Activated CD4-positive, alpha-beta T cell treated with anti-CD3 and anti-CD28 coated beads, Interleukin-2, amount 10 ng/mL, durations not matched to agents 24 days and 14 days (primary cell): ENCODE measurements at regions of chr3 and their contacts with region 1.

Region 1: DNA sequence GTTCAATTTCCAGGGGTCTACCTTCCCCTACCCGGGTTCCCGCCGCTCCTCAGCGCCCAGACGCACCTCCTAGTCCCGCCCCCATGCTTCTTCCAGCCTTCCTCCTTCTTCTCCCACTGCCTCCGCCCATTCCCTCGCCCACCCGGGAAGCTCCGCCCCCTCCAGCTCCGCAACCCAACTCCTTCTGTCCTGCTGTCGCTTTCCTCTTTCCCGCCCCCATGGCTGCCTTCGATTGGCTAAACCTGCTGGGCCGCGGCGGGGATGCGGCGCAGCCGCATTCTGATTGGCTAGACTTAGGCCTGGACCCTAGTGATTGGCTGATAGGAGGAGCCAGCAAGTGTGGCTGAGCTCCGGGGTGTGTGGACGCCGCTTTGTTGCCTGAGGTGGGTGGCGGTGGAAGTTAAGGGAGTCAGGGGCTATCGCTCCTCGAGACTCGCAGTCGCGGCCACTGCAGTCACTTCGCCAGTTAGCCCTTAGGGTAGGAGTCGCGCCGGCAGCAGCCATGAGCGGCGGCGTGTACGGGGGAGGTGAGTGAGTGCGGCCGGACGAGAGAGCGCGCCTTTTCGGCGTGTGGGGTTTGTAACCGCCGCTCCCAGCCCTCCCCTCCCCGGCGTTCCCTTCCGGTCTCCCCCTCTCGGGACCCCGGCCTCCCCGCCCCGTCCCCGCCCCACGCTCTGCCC is at the start of gene ACTL6A:
- DNase-seq: peak; percentile 99
- H3K4me3 Mint-ChIP-seq: peak within 1 kb of the TSS; percentile 98
- H3K27ac Mint-ChIP-seq: peak within 1 kb of the TSS; percentile 97
- H3K4me1 Mint-ChIP-seq: peaks cover 27% of the 10 kb centered on the region
- H3K27me3 Mint-ChIP-seq: peaks cover 19% of the 10 kb centered on the region
- total RNA-seq, gene ACTL6A: 127 and 131 TPM in 2 replicates

Region 2: GRCh38 chr3:179015551-179016020 is 547.1 kb before region 1 on chr3:
- intact Hi-C with region 1: loop called (anchors 1 kb)
- DNase-seq: peak; percentile 94
- H3K4me3 Mint-ChIP-seq: no peak overlapping the region
- H3K27ac Mint-ChIP-seq: peak overlapping the region; percentile 5
- H3K4me1 Mint-ChIP-seq: peaks cover 28% of the 10 kb centered on the region
- H3K27me3 Mint-ChIP-seq: peaks cover 14% of the 10 kb centered on the region

Region 3: DNA sequence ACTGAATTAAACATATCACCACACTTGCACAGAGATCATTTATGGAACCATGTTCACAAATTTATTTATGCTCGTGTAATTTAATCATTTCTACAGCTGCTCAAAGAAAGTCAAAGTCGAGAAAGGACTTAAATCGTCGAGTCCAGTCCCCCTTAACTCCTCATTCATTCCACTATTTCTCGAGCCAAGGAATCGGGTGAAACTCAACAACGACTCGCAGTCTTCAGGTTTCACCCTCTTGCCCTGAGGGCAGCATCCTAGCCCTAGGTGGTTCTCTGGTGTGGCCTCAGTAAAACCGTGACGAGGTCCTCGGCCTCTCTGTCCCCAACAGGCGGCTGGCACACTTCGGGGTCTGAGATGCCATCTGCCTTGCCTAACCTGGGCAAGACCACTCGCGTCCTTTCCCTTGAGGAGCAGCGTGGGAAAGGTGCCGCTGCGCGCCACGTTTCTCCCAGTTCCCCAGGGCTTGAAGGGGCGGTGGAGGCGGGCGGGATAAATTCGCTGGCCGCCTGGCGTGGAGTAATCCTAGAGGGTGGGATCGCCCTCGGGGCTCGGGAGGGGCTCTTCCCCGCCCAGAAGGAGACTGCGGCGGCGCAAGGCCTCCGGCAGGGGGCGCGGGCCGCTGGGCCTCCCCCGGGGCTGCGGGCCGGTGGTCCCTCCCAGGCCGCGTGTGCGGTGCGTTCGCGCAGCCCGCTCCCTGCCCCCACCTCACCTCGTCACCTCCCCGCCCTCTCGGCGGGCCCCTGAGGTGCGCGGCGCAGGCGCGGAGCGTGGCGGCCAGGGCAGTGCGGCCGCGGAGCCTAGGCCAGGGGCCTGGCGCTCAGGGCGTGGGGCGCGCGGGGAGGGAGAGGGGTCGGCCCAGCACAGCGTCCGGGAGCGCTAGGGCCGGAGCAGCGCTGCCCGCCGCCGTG is 240.2 kb before region 1 on chr3 and contains the start of gene ZNF639:
- intact Hi-C with region 1: loop called (anchors 1 kb)
- DNase-seq: peak; percentile 95
- H3K4me3 Mint-ChIP-seq: peak within 1 kb of the TSS; percentile 89
- H3K27ac Mint-ChIP-seq: peak within 1 kb of the TSS; percentile 93
- H3K4me1 Mint-ChIP-seq: peaks cover 27% of the 10 kb centered on the region
- H3K27me3 Mint-ChIP-seq: peaks cover 5% of the 10 kb centered on the region
- total RNA-seq, gene ZNF639: 36.7 and 38.1 TPM in 2 replicates

Region 4: DNA sequence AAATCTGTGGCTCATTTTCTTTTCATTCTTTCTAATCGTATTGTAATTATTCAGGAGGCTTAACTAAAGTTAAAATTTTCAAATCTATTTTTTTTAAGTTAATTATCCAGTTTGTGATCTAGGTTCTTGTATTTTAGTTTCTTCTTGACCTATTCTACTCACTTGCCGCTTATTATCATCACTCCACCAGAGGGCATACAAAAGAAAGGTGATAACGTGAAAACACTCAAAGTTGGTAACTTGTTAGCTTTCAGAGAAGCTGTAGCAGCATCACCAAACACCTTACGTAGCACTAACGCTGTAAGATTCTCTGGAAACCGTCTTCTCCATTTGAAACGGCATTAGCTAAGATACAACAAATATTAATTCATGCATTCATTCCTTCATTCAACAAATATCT is 116.2 kb before region 1 on chr3:
- intact Hi-C with region 1: loop called (anchors 1 kb)
- DNase-seq: peak; percentile 65
- H3K4me3 Mint-ChIP-seq: no peak overlapping the region
- H3K27ac Mint-ChIP-seq: no peak overlapping the region
- H3K4me1 Mint-ChIP-seq: peaks cover 25% of the 10 kb centered on the region
- H3K27me3 Mint-ChIP-seq: peaks cover 30% of the 10 kb centered on the region

Region 5: GRCh38 chr3:179592889-179593288 is 30.2 kb after region 1 on chr3:
- intact Hi-C with region 1: no loop called
- DNase-seq: no peak
- H3K4me3 Mint-ChIP-seq: no peak overlapping the region
- H3K27ac Mint-ChIP-seq: no peak overlapping the region
- H3K4me1 Mint-ChIP-seq: peaks cover 3% of the 10 kb centered on the region
- H3K27me3 Mint-ChIP-seq: no peaks in the 10 kb centered on the region

Region 6: GRCh38 chr3:179604321-179605078 is 41.8 kb after region 1 on chr3 and contains the starts of genes MRPL47 and NDUFB5:
- intact Hi-C with region 1: loop called (anchors 1 kb)
- DNase-seq: peak; percentile 98
- H3K4me3 Mint-ChIP-seq: peak within 1 kb of the TSS; percentile 99
- H3K27ac Mint-ChIP-seq: peak within 1 kb of the TSS; percentile 100
- H3K4me1 Mint-ChIP-seq: peaks cover 34% of the 10 kb centered on the region
- H3K27me3 Mint-ChIP-seq: no peaks in the 10 kb centered on the region
- total RNA-seq, gene MRPL47: 66.6 and 68.2 TPM in 2 replicates
- total RNA-seq, gene NDUFB5: 91.8 and 98.6 TPM in 2 replicates